ENCODE measurements at regions of chr12 and their contacts with region 1.

Region 1: GRCh38 chr12:63151623-63152320 is 771 bp upstream of the AVPR1A start:
- DNase-seq: peak; percentile 51
- H3K4me3 ChIP-seq: no peak overlapping the region
- H3K27ac ChIP-seq: no peak overlapping the region
- H3K4me1 ChIP-seq: no peaks in the 10 kb centered on the region
- H3K27me3 ChIP-seq: peaks cover 32 to 63% of the 10 kb centered on the region in 2 experiments
- CTCF ChIP-seq: peak; percentile 70 to 74
- POLR2A ChIP-seq: no peak

Region 2: DNA sequence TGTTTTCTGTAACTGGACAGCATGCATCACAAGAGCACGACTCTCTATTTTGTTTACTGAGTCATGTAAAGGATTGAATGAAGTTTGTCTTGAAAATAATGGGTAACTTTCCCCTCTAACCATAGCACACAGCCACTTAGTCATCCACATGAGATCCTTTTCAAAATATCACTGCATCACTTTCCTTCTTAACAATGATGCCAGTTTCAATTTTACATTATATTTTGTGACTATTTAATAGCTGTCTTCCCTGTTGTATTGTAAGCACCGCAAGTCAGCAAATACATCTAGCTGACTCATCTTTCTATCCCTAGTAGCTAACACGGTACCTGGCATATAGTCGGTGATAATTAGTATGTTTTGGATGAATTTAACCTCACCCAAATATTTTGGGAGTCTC is 133.5 kb before region 1 on chr12:
- CTCF ChIA-PET with region 1: no interaction called
- POLR2A ChIA-PET with region 1: no interaction called
- dilution Hi-C with region 1: no loop called
- intact Hi-C with region 1: no loop called
- DNase-seq: no peak
- H3K4me3 ChIP-seq: no peak overlapping the region
- H3K27ac ChIP-seq: no peak overlapping the region
- H3K4me1 ChIP-seq: no peaks in the 10 kb centered on the region
- H3K27me3 ChIP-seq: no peaks in the 10 kb centered on the region
- CTCF ChIP-seq: no peak
- POLR2A ChIP-seq: no peak

Region 3: GRCh38 chr12:63124778-63125177 is 27.0 kb before region 1 on chr12:
- CTCF ChIA-PET with region 1: interaction called, 10 read pairs
- POLR2A ChIA-PET with region 1: no interaction called
- dilution Hi-C with region 1: no loop called
- intact Hi-C with region 1: no loop called
- DNase-seq: no peak
- H3K4me3 ChIP-seq: no peak overlapping the region
- H3K27ac ChIP-seq: no peak overlapping the region
- H3K4me1 ChIP-seq: no peaks in the 10 kb centered on the region
- H3K27me3 ChIP-seq: no peaks in the 10 kb centered on the region
- CTCF ChIP-seq: no peak
- POLR2A ChIP-seq: no peak

Region 4: GRCh38 chr12:63138488-63138887 is 13.3 kb before region 1 on chr12:
- CTCF ChIA-PET with region 1: interaction called, 25 read pairs
- POLR2A ChIA-PET with region 1: no interaction called
- dilution Hi-C with region 1: no loop called
- intact Hi-C with region 1: no loop called
- DNase-seq: no peak
- H3K4me3 ChIP-seq: no peak overlapping the region
- H3K27ac ChIP-seq: no peak overlapping the region
- H3K4me1 ChIP-seq: no peaks in the 10 kb centered on the region
- H3K27me3 ChIP-seq: peaks cover 0 to 3% of the 10 kb centered on the region in 2 experiments
- CTCF ChIP-seq: no peak
- POLR2A ChIP-seq: no peak

Region 5: DNA sequence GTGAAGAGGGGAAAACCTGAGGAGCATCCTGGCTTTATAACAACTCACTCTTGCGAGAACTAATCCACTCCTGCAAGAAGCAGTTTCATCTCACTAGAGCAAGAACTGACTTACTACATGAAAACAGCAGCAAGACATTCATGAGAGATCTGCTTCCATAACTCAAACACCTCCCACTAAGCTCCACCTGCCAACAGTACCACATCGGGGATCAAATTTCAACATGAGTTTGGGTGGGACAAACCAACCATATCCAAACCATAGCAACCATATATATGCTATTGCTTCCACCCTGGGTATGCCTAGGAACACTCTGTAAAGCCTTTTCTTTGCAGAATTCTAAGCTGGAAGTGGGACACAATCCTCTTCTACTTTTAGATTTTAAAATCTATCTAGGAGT is 13.1 kb after region 1 on chr12:
- CTCF ChIA-PET with region 1: interaction called, 22 read pairs
- POLR2A ChIA-PET with region 1: no interaction called
- dilution Hi-C with region 1: no loop called
- intact Hi-C with region 1: no loop called
- DNase-seq: no peak
- H3K4me3 ChIP-seq: no peak overlapping the region
- H3K27ac ChIP-seq: no peak overlapping the region
- H3K4me1 ChIP-seq: no peaks in the 10 kb centered on the region
- H3K27me3 ChIP-seq: no peaks in the 10 kb centered on the region
- CTCF ChIP-seq: no peak
- POLR2A ChIP-seq: no peak

Region 6: GRCh38 chr12:63170321-63170720 is 18.5 kb after region 1 on chr12:
- CTCF ChIA-PET with region 1: interaction called, 10 read pairs
- POLR2A ChIA-PET with region 1: no interaction called
- dilution Hi-C with region 1: no loop called
- intact Hi-C with region 1: no loop called
- DNase-seq: no peak
- H3K4me3 ChIP-seq: no peak overlapping the region
- H3K27ac ChIP-seq: no peak overlapping the region
- H3K4me1 ChIP-seq: no peaks in the 10 kb centered on the region
- H3K27me3 ChIP-seq: no peaks in the 10 kb centered on the region
- CTCF ChIP-seq: no peak
- POLR2A ChIP-seq: no peak

Region 7: GRCh38 chr12:63206901-63207300 is 55.1 kb after region 1 on chr12:
- CTCF ChIA-PET with region 1: no interaction called
- POLR2A ChIA-PET with region 1: no interaction called
- dilution Hi-C with region 1: no loop called
- intact Hi-C with region 1: no loop called
- DNase-seq: no peak
- H3K4me3 ChIP-seq: no peak overlapping the region
- H3K27ac ChIP-seq: no peak overlapping the region
- H3K4me1 ChIP-seq: no peaks in the 10 kb centered on the region
- H3K27me3 ChIP-seq: no peaks in the 10 kb centered on the region
- CTCF ChIP-seq: no peak
- POLR2A ChIP-seq: no peak

Region 8: DNA sequence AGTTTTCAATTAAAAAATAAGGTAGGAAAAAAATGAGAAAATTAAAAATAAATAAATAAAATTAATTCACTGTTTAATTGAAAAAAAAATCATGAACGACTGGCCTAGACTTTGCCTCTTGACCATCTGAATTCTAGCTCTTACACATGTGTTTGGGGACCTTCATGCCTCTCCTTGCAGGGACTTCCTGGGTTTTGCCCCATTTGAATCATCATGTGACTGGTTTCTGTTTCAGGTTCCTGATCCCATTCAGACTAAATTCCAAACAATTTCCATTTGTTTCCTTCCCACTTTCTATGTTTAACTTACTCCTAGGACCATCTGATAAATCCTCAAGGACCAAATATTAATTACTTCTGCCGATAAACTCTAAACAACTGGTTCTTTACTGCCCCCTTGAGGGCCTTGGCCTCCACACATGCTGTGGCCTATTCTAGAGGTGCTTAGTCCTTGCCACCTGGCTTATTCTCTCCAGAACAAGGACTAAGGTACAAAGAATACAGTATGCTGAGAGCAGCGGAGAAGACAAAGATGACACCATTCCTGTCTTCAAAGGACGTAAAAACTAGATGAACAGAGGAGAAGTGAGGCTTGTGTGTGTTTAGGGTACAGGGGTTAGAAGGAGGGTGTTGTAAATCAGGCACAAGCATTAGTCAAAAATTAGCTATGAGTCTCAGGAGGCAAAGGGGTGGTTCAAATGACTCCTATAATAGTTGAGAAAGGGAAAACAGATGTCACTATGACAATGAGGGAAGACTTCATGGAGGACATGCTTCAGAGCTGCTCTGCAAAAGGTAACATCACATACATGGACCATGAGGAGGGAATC is 125.0 kb after region 1 on chr12:
- CTCF ChIA-PET with region 1: interaction called, 10 read pairs
- POLR2A ChIA-PET with region 1: no interaction called
- dilution Hi-C with region 1: no loop called
- intact Hi-C with region 1: loop called (anchors 2 kb)
- DNase-seq: peak; percentile 56
- H3K4me3 ChIP-seq: no peak overlapping the region
- H3K27ac ChIP-seq: no peak overlapping the region
- H3K4me1 ChIP-seq: no peaks in the 10 kb centered on the region
- H3K27me3 ChIP-seq: peaks cover 2% of the 10 kb centered on the region in 2 experiments
- CTCF ChIP-seq: peak; percentile 64 to 73
- POLR2A ChIP-seq: no peak

Region 9: GRCh38 chr12:63802012-63802608 is 650.3 kb after region 1 on chr12:
- CTCF ChIA-PET with region 1: interaction called, 13 read pairs
- POLR2A ChIA-PET with region 1: no interaction called
- dilution Hi-C with region 1: no loop called
- intact Hi-C with region 1: loop called (anchors 2 kb)
- DNase-seq: peak; percentile 43
- H3K4me3 ChIP-seq: no peak overlapping the region
- H3K27ac ChIP-seq: no peak overlapping the region
- H3K4me1 ChIP-seq: no peaks in the 10 kb centered on the region
- H3K27me3 ChIP-seq: no peaks in the 10 kb centered on the region
- CTCF ChIP-seq: peak; percentile 31
- POLR2A ChIP-seq: no peak